Naive thymus-derived CD4-positive, alpha-beta T cell (primary cell): ENCODE measurements at regions of chr6 and their contacts with region 1.

Region 1: GRCh38 chr6:142692942-142693341 is 252.0 kb downstream of the HIVEP2 start:
- DNase-seq: peak; percentile 39 to 73 (median 57)
- ATAC-seq: peak; percentile 89
- H3K4me3 ChIP-seq: no peak overlapping the region
- H3K4me3 Mint-ChIP-seq: peak overlapping the region in 3 of 10 donors; percentile 0 to 27 (median 16)
- H3K27ac ChIP-seq: no peak overlapping the region
- H3K27ac Mint-ChIP-seq: peak overlapping the region in 7 of 9 donors; percentile 5 to 59 (median 40)
- H3K4me1 ChIP-seq: peaks cover 0 to 7% of the 10 kb centered on the region in 2 donors
- H3K4me1 Mint-ChIP-seq: peaks cover 9 to 31% (median 22%) of the 10 kb centered on the region in 7 donors
- H3K27me3 ChIP-seq: no peaks in the 10 kb centered on the region
- H3K27me3 Mint-ChIP-seq: peaks cover 0 to 2% (median 0%) of the 10 kb centered on the region in 5 donors

Region 2: GRCh38 chr6:141195251-141195832 is 1497.6 kb before region 1 on chr6:
- CTCF ChIA-PET with region 1: no interaction called
- POLR2A ChIA-PET with region 1: no interaction called
- intact Hi-C with region 1: no loop called
- DNase-seq: no peak
- ATAC-seq: no peak
- H3K4me3 ChIP-seq: no peak overlapping the region
- H3K4me3 Mint-ChIP-seq: no peak overlapping the region
- H3K27ac ChIP-seq: no peak overlapping the region
- H3K27ac Mint-ChIP-seq: no peak overlapping the region
- H3K4me1 ChIP-seq: no peaks in the 10 kb centered on the region
- H3K4me1 Mint-ChIP-seq: no peaks in the 10 kb centered on the region
- H3K27me3 ChIP-seq: no peaks in the 10 kb centered on the region
- H3K27me3 Mint-ChIP-seq: peaks cover 0 to 9% (median 0%) of the 10 kb centered on the region in 5 donors

Region 3: DNA sequence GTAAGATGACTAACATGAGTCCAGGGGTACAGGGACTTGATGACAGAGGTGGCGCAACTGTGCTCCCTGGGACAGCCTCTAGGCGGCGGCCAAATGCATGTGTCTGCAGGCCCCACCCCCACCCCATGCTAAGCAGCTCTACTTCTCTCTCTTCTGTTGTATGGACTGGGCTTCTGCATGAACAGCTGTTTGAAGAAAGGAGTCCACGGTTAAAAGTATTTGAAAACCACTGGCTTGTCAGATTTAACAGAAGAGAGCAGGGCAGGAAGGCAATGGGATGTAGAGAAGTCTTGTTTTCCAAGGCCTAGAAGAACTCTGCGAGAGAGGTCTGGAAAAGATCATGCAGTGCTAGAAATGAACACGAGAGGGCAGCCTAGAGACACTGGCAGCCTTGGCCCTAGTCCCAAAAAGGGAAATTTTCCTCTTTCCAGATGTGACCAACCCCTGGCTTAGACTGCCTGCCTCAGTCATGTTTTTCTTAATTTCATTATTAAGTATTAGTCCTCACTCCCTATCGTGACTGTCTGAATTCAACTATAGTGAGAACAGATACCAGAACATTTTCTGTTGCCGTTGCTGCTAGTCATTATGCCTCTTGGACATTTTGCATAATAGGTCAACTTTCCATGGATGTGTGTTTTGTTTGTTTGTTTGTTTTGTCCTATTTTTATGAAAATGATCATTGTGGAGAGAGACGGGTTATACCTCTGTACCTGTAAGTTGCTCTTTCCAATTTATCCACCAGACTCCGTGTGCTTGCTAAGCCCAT is 126.1 kb before region 1 on chr6:
- CTCF ChIA-PET with region 1: no interaction called
- POLR2A ChIA-PET with region 1: no interaction called
- intact Hi-C with region 1: loop called (anchors 2 to 5 kb)
- DNase-seq: peak in 8 of 9 donors; percentile 17 to 69 (median 54)
- ATAC-seq: peak; percentile 81
- H3K4me3 ChIP-seq: no peak overlapping the region
- H3K4me3 Mint-ChIP-seq: peak overlapping the region in 7 of 10 donors; percentile 8 to 78 (median 51)
- H3K27ac ChIP-seq: no peak overlapping the region
- H3K27ac Mint-ChIP-seq: peak overlapping the region in 8 of 9 donors; percentile 51 to 92 (median 76)
- H3K4me1 ChIP-seq: peaks cover 0 to 60% of the 10 kb centered on the region in 2 donors
- H3K4me1 Mint-ChIP-seq: peaks cover 19 to 85% (median 74%) of the 10 kb centered on the region in 7 donors
- H3K27me3 ChIP-seq: no peaks in the 10 kb centered on the region
- H3K27me3 Mint-ChIP-seq: no peaks in the 10 kb centered on the region

Region 4: GRCh38 chr6:142952614-142953013 is 259.7 kb after region 1 on chr6:
- CTCF ChIA-PET with region 1: interaction called, 18 read pairs
- POLR2A ChIA-PET with region 1: no interaction called
- intact Hi-C with region 1: loop called (anchors 1 to 2 kb)
- DNase-seq: no peak
- ATAC-seq: peak; percentile 26
- H3K4me3 ChIP-seq: no peak overlapping the region
- H3K4me3 Mint-ChIP-seq: no peak overlapping the region
- H3K27ac ChIP-seq: peak overlapping the region; percentile 23
- H3K27ac Mint-ChIP-seq: peak overlapping the region in 8 of 9 donors; percentile 17 to 94 (median 76)
- H3K4me1 ChIP-seq: no peaks in the 10 kb centered on the region
- H3K4me1 Mint-ChIP-seq: peaks cover 15 to 46% (median 29%) of the 10 kb centered on the region in 7 donors
- H3K27me3 ChIP-seq: no peaks in the 10 kb centered on the region
- H3K27me3 Mint-ChIP-seq: peaks cover 0 to 4% (median 0%) of the 10 kb centered on the region in 5 donors

Region 5: GRCh38 chr6:143026696-143027449 is 333.9 kb after region 1 on chr6:
- CTCF ChIA-PET with region 1: interaction called, 25 read pairs
- POLR2A ChIA-PET with region 1: no interaction called
- intact Hi-C with region 1: loop called (anchors 1 kb)
- DNase-seq: peak in 7 of 9 donors; percentile 3 to 47 (median 34)
- ATAC-seq: peak; percentile 76
- H3K4me3 ChIP-seq: no peak overlapping the region
- H3K4me3 Mint-ChIP-seq: no peak overlapping the region
- H3K27ac ChIP-seq: no peak overlapping the region
- H3K27ac Mint-ChIP-seq: peak overlapping the region in 3 of 9 donors; percentile 28 to 76 (median 53)
- H3K4me1 ChIP-seq: no peaks in the 10 kb centered on the region
- H3K4me1 Mint-ChIP-seq: peaks cover 0 to 5% (median 0%) of the 10 kb centered on the region in 7 donors
- H3K27me3 ChIP-seq: no peaks in the 10 kb centered on the region
- H3K27me3 Mint-ChIP-seq: no peaks in the 10 kb centered on the region

Region 6: GRCh38 chr6:143279385-143279784 is 586.4 kb after region 1 on chr6:
- CTCF ChIA-PET with region 1: interaction called, 10 read pairs
- POLR2A ChIA-PET with region 1: no interaction called
- intact Hi-C with region 1: loop called in 1 of 2 experiments (anchors 1 kb)
- DNase-seq: peak in 3 of 9 donors; percentile 1 to 7 (median 2)
- ATAC-seq: peak; percentile 40
- H3K4me3 ChIP-seq: no peak overlapping the region
- H3K4me3 Mint-ChIP-seq: no peak overlapping the region
- H3K27ac ChIP-seq: no peak overlapping the region
- H3K27ac Mint-ChIP-seq: no peak overlapping the region
- H3K4me1 ChIP-seq: no peaks in the 10 kb centered on the region
- H3K4me1 Mint-ChIP-seq: peaks cover 0 to 12% (median 0%) of the 10 kb centered on the region in 7 donors
- H3K27me3 ChIP-seq: no peaks in the 10 kb centered on the region
- H3K27me3 Mint-ChIP-seq: no peaks in the 10 kb centered on the region

Region 7: DNA sequence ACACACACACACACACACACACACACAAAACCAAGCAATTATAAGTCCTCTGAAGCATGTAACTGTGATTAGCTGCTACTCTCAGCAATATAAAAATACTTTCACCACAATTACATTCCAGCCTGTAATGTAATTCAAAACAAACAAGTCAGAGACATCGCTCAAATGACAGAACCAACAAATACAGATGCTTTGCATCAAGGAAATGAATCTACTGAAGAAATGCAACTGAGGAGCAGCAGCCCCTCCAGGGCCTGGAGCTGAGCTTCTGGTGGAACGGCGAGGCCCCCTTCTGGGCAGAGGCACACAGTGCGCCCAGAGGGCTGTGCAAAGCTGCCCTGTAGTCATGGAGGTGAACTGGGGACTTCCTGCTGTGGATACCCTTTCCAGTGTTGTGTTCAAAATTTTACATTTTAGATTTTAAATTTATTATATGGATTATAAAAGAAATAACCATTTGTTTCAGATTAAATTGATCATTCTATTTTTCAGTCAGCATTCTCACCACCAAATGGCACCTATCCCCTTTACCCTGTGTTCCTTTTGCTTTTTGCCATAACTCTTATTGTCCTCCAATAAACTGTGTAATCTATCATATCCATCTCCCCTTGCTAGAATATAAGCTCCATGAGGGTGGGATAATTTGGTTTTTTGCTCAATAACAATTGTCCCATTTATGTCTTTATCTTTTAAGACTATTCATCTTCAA is 734.3 kb after region 1 on chr6:
- CTCF ChIA-PET with region 1: interaction called, 12 read pairs
- POLR2A ChIA-PET with region 1: no interaction called
- intact Hi-C with region 1: loop called (anchors 1 kb)
- DNase-seq: peak; percentile 53 to 80 (median 73)
- ATAC-seq: peak; percentile 99
- H3K4me3 ChIP-seq: no peak overlapping the region
- H3K4me3 Mint-ChIP-seq: no peak overlapping the region
- H3K27ac ChIP-seq: no peak overlapping the region
- H3K27ac Mint-ChIP-seq: peak overlapping the region in 3 of 9 donors; percentile 25 to 75 (median 28)
- H3K4me1 ChIP-seq: no peaks in the 10 kb centered on the region
- H3K4me1 Mint-ChIP-seq: peaks cover 0 to 5% (median 0%) of the 10 kb centered on the region in 7 donors
- H3K27me3 ChIP-seq: no peaks in the 10 kb centered on the region
- H3K27me3 Mint-ChIP-seq: no peaks in the 10 kb centered on the region

Region 8: GRCh38 chr6:144013486-144013909 is 1320.6 kb after region 1 on chr6:
- CTCF ChIA-PET with region 1: no interaction called
- POLR2A ChIA-PET with region 1: no interaction called
- intact Hi-C with region 1: loop called (anchors 2 to 10 kb)
- DNase-seq: peak; percentile 18 to 58 (median 45)
- ATAC-seq: peak; percentile 54
- H3K4me3 ChIP-seq: no peak overlapping the region
- H3K4me3 Mint-ChIP-seq: no peak overlapping the region
- H3K27ac ChIP-seq: no peak overlapping the region
- H3K27ac Mint-ChIP-seq: peak overlapping the region in 1 of 9 donors; percentile 9
- H3K4me1 ChIP-seq: no peaks in the 10 kb centered on the region
- H3K4me1 Mint-ChIP-seq: peaks cover 0 to 4% (median 0%) of the 10 kb centered on the region in 7 donors
- H3K27me3 ChIP-seq: peaks cover 0 to 6% of the 10 kb centered on the region in 2 donors
- H3K27me3 Mint-ChIP-seq: peaks cover 11 to 45% (median 28%) of the 10 kb centered on the region in 5 donors